WTC11 (cell line): ENCODE measurements at regions of chr6 and their contacts with region 1.

Region 1: DNA sequence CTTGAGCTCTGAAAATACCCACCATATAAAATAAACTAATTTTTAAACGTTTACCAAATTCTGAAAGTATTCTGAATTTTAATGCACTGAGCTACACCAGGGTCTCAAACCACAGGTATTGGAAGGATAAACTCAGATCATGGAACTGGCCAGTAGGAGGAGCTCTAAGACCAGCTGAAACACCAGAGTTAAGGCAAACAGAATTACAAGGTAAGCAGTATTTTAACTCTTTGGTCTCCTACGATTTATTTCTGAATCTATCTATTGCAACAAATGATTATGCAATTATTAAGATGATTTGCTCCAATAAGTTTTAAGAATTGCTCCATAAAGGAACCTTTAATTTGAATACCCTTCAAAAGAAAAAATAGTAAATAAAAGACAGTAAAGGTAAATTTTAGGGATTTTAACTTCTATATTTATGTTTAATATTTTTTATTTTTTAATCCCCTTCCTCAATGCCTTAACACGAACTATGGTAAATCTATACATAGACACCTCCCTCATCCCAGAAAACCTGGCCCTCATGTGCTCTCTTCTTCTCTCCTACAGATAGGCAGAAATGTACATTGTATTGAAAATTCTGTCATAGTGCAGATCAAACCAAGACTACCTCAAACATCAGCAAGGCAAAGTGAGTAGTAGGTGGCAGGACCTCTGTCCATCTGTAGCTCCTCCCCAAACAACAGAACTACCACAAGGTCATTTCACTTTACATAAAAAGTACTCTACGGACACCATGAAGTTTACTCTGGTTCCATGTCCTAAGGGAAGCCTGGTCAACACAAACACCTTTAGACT is 58.4 kb downstream of the SMLR1 start:
- DNase-seq: peak; percentile 72
- ATAC-seq: peak; percentile 82
- H3K4me3 Mint-ChIP-seq: no peak overlapping the region
- H3K27ac Mint-ChIP-seq: no peak overlapping the region
- H3K4me1 Mint-ChIP-seq: peaks cover 3% of the 10 kb centered on the region
- H3K27me3 Mint-ChIP-seq: no peaks in the 10 kb centered on the region
- CTCF ChIP-seq: peak; percentile 83

Region 2: DNA sequence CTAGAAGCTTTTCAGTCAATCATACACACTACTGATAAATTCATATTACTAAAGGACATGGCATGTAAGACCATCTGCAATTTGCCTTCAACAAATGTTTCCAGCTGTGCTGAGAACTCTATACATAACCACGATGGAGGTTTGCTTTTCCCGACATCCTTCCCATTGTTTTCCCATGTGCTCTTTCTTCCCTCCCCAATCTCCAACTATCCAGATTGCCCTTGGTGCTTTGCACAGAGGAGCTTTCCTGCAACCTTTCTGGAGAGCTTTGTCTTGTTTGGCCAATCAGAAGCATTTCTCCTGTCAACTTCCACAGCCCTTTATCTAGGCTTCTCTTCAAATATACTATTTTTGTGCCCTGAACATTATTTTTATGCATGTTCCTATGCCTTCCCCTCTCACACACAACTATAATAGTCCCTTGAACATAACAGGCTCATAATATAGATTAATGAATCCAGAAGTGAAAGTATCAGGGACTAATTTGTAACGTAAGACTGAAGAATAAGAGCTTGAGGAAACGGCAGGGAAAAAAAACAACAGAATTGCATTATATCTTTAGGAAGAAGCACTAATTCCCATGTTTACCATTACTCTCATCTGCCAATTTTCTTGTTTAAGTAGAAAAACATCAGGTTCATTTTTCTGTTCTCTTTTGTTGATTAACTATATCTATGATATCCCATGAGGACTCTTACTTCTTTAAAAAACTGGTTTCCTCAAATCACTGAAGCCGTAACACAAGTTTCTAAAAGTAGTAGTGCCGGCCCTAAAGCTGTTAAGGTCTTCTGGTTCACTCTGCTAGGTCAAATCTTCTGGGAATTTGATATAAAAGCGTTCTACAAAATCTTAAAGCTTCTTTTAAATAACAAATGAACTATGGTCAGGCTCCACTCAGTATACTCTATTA is 38.3 kb before region 1 on chr6:
- CTCF ChIA-PET with region 1: no interaction called
- POLR2A ChIA-PET with region 1: no interaction called
- DNase-seq: no peak
- ATAC-seq: no peak
- H3K4me3 Mint-ChIP-seq: no peak overlapping the region
- H3K27ac Mint-ChIP-seq: 0 out of 2 replicates have a peak overlapping the region, but pooled peaks have one; percentile 22
- H3K4me1 Mint-ChIP-seq: peaks cover 19% of the 10 kb centered on the region
- H3K27me3 Mint-ChIP-seq: no peaks in the 10 kb centered on the region
- CTCF ChIP-seq: no peak

Region 3: DNA sequence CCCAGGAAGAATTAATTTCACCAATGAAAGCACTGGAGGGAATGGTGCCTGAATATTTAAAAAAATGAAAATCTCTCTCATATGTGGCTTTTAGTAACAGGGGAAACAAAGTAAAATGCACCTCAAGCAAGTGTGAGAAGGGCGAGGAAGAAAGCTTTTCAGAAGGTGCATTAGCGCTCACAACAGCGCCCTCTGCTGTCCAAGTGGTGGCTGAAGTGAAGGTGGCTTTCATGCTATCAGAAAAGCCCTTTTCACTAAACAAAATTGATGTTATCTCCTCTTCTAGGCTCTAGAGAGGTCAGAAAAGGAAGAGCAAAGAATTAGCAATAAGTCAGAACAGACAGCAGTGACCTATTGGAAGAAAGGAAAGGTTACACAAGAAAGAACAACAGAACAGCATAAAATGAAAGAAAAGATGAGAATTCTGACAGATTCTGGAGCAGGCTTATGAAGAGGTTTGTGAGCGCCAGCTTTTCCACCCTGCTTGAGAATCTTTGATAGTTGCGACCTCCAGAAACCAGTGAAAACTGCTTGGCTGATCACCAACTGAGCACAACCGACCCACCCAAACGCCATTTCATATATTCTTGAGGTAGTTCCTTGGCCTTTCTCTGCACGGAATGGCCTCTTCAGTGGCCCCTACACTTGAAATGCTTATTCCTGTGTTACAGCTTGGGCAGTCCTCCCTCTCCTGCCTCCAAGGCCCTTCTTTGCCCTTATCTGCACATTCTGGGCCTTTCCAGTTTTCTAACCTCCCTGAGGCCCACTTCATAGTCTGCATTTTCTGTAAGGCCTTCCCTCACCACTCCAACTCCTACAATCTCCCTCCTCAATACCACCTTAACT is 13.1 kb before region 1 on chr6:
- CTCF ChIA-PET with region 1: interaction called, 13 read pairs
- POLR2A ChIA-PET with region 1: no interaction called
- DNase-seq: peak; percentile 80
- ATAC-seq: peak; percentile 67
- H3K4me3 Mint-ChIP-seq: no peak overlapping the region
- H3K27ac Mint-ChIP-seq: no peak overlapping the region
- H3K4me1 Mint-ChIP-seq: peaks cover 6% of the 10 kb centered on the region; the same call in 1 of the 2 replicates
- H3K27me3 Mint-ChIP-seq: no peaks in the 10 kb centered on the region
- CTCF ChIP-seq: peak; percentile 93

Region 4: DNA sequence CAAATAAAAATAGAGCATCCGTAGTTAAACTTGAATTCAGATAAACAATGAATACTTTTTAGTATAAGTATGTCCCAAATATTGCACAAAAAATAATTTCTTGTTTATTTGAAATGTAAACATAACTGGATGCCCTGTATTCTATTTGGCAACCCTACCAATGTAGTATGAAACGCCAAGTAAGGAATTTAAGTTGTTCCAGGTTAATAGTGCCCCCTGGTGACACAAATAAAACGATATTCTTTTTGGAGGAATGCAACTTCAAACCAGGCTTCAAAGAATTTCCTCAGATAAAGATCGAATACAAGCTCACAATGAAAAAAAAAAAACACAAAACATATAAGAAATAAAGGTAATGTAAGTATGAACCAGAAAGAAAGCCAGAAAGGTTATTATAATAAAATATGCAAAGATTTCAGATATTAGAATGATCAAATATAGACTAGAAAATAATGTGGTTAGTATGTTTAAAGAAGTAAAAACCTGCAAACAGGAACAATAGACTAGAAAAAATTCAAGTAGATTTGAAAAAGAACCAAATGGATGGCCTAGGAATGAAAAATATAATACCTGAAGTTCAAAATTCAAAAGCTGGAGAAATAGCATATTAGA is 231.3 kb after region 1 on chr6:
- CTCF ChIA-PET with region 1: interaction called, 40 read pairs
- POLR2A ChIA-PET with region 1: no interaction called
- DNase-seq: no peak
- ATAC-seq: no peak
- H3K4me3 Mint-ChIP-seq: no peak overlapping the region
- H3K27ac Mint-ChIP-seq: no peak overlapping the region
- H3K4me1 Mint-ChIP-seq: peaks cover under 1% of the 10 kb centered on the region
- H3K27me3 Mint-ChIP-seq: no peaks in the 10 kb centered on the region
- CTCF ChIP-seq: 0 out of 2 replicates have a peak, but pooled peaks have one; percentile 25

Region 5: GRCh38 chr6:131159608-131160007 is 274.0 kb after region 1 on chr6:
- CTCF ChIA-PET with region 1: interaction called, 12 read pairs
- POLR2A ChIA-PET with region 1: no interaction called
- DNase-seq: no peak
- ATAC-seq: no peak
- H3K4me3 Mint-ChIP-seq: no peak overlapping the region
- H3K27ac Mint-ChIP-seq: no peak overlapping the region
- H3K4me1 Mint-ChIP-seq: peaks cover 54% of the 10 kb centered on the region
- H3K27me3 Mint-ChIP-seq: no peaks in the 10 kb centered on the region
- CTCF ChIP-seq: no peak